ENCODE measurements at regions of chrX and their contacts with region 1.

Region 1: DNA sequence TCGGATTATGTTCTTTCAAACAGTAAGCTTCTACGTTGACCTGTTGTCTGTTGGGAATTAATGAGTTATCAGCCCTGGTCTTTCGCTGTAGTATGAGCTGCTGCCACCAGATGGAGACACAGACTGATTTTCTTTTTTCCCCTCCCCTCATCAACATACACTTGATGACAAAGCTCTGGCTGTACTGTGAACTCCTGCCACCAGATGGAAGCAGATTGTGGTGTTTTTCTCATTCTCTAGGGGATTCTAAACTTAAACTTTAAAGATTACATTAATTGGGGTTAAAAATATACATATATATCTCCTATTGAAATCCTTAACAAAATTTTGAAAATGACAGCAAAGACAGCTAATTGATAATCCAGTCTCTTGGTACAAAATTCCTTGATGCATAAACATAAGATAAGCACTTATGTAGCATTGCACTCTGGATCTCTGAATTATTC is 44.8 kb downstream of the SMS start:
- DNase-seq: peak; percentile 62 to 64
- H3K4me3 ChIP-seq: no peak overlapping the region
- H3K4me3 Mint-ChIP-seq: no peak overlapping the region
- H3K27ac Mint-ChIP-seq: no peak overlapping the region
- H3K4me1 ChIP-seq: 0 out of 2 replicates have a peak, but pooled peaks cover 6% of the 10 kb centered on the region
- H3K4me1 Mint-ChIP-seq: no peaks in the 10 kb centered on the region
- H3K27me3 ChIP-seq: no peaks in the 10 kb centered on the region
- H3K27me3 Mint-ChIP-seq: no peaks in the 10 kb centered on the region
- CTCF ChIP-seq: peak; percentile 64 to 77

Region 2: DNA sequence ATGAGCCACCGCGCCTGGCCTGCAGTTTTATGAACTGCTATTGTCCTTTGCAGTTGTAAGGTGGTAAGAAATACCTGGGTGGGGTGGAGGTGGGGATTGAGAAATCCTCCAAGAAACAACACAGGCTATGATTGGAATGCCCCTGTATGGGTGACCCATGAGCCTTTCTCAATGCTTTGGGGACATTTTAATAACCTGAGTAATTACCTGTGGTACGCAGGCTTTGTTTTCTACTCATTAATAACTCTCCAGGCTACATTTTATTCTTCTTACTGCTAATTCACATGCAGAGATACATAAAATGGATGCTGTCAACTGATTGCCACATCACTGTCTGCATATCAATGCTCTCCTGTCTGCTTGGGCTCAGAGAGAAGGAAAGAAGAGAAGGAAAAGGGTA is 88.6 kb after region 1 on chrX:
- CTCF ChIA-PET with region 1: no interaction called
- POLR2A ChIA-PET with region 1: no interaction called
- intact Hi-C with region 1: loop called (anchors 10 kb)
- DNase-seq: peak; percentile 10 to 32
- H3K4me3 ChIP-seq: no peak overlapping the region
- H3K4me3 Mint-ChIP-seq: no peak overlapping the region
- H3K27ac Mint-ChIP-seq: no peak overlapping the region
- H3K4me1 ChIP-seq: no peaks in the 10 kb centered on the region
- H3K4me1 Mint-ChIP-seq: no peaks in the 10 kb centered on the region
- H3K27me3 ChIP-seq: no peaks in the 10 kb centered on the region
- H3K27me3 Mint-ChIP-seq: no peaks in the 10 kb centered on the region
- CTCF ChIP-seq: no peak

Region 3: GRCh38 chrX:22192417-22193060 is 207.2 kb after region 1 on chrX:
- CTCF ChIA-PET with region 1: interaction called, 7 read pairs
- POLR2A ChIA-PET with region 1: no interaction called
- intact Hi-C with region 1: loop called (anchors 1 kb)
- DNase-seq: peak; percentile 59 to 65
- H3K4me3 ChIP-seq: no peak overlapping the region
- H3K4me3 Mint-ChIP-seq: peak overlapping the region; percentile 53
- H3K27ac Mint-ChIP-seq: no peak overlapping the region
- H3K4me1 ChIP-seq: no peaks in the 10 kb centered on the region; the same call in 1 of the 2 replicates
- H3K4me1 Mint-ChIP-seq: peaks cover 7% of the 10 kb centered on the region
- H3K27me3 ChIP-seq: no peaks in the 10 kb centered on the region
- H3K27me3 Mint-ChIP-seq: no peaks in the 10 kb centered on the region
- CTCF ChIP-seq: peak; percentile 45 to 73

Region 4: DNA sequence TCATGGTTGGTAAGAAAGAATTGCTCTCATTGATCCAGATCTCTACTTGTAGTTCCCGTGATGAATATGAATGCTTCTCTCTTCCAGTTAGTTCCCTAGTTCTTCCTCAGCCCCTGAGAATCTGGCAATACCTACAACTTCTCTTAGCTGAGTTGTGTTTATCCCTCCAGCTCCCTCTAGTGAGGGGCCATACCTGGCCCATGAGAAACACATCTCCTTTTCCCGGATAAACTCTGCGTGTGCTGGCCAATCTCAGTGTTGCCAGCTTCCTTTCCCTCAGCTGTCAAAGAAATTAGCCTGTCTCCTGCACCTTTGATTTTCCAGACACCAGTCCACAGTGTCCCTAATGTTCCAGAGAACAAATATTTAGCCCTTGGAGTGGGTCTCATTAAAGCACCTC is 293.0 kb after region 1 on chrX:
- CTCF ChIA-PET with region 1: interaction called, 6 read pairs
- POLR2A ChIA-PET with region 1: no interaction called
- intact Hi-C with region 1: loop called (anchors 1 kb)
- DNase-seq: peak in 1 of 2 experiments; percentile 5
- H3K4me3 ChIP-seq: no peak overlapping the region
- H3K4me3 Mint-ChIP-seq: no peak overlapping the region
- H3K27ac Mint-ChIP-seq: no peak overlapping the region
- H3K4me1 ChIP-seq: no peaks in the 10 kb centered on the region
- H3K4me1 Mint-ChIP-seq: no peaks in the 10 kb centered on the region
- H3K27me3 ChIP-seq: no peaks in the 10 kb centered on the region
- H3K27me3 Mint-ChIP-seq: peaks cover 9% of the 10 kb centered on the region
- CTCF ChIP-seq: peak; percentile 10 to 54

Region 5: DNA sequence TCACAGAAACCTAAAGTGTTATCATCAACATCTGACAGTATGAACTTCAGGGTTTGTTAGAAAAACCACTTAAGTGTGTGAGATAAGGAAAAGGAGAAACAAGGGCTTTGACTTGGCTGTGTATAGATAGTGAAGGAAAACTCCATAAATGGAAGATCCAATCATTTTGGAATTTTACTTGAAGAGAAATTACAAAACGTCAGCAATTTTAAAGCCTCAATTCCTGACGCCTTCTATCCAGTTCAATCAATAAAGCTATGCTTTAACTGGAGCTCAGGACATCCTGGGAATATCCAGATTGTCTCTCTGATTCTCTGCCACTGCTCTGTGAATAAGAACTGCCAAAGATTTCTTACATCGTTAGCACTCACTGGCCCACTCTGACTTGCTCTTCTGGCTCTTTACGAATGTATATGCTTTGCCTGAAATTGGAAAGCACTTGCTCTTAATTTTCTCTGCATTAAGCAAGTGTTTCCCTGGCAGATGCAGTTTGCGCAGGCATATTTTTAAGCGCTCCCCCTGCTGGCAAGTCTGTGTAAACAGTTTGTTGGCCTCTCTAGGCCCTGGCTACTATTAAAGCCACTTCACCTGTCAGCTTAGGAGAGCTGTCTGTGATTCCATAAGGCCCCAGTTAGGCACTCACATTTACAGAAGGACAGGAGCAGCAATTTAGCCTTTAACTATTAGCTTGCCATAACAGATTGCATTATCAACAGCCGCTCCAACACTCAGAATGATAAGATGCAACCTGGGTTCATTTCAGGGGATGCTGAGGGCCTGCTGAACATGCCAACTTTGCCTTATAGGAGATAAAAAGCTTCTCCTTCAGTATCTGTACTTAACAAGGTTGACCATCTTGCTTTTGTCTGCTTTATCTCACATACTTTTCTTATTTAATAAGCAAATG is 763.0 kb after region 1 on chrX:
- CTCF ChIA-PET with region 1: interaction called, 9 read pairs
- POLR2A ChIA-PET with region 1: no interaction called
- intact Hi-C with region 1: loop called (anchors 5 kb)
- DNase-seq: peak in 1 of 2 experiments; percentile 54
- H3K4me3 ChIP-seq: no peak overlapping the region
- H3K4me3 Mint-ChIP-seq: no peak overlapping the region
- H3K27ac Mint-ChIP-seq: no peak overlapping the region
- H3K4me1 ChIP-seq: no peaks in the 10 kb centered on the region
- H3K4me1 Mint-ChIP-seq: no peaks in the 10 kb centered on the region
- H3K27me3 ChIP-seq: no peaks in the 10 kb centered on the region
- H3K27me3 Mint-ChIP-seq: peaks cover 6% of the 10 kb centered on the region
- CTCF ChIP-seq: peak; percentile 53 to 74